AG04449 (cell line): ENCODE measurements at regions of chr7 and their contacts with region 1.

Region 1: DNA sequence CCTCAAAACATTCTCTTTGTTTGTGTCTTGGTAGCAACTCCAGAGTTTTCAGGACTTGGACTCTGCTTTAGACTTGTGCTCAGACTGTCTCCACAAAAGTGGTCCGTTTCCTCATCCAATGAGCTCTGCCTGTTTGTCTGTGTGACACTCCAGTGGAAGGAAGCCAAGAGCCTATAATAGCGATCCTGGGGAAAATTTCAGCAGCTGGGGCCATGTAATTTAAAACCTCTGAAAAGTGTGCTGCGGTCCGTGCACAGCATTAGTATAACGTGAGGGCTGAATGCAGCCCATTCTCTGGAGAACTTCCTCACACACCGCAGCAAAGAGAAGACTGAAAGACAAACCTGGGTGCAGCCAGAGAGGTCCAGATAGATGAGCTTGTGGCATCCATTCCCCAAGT is at the start of gene LRRC17:
- DNase-seq: no peak
- H3K4me3 ChIP-seq: peak within 1 kb of the TSS; percentile 52
- CTCF ChIP-seq: no peak

Region 2: GRCh38 chr7:102891693-102892261 is 21.0 kb before region 1 on chr7:
- CTCF ChIA-PET with region 1: interaction called, 3 read pairs
- POLR2A ChIA-PET with region 1: interaction called, 13 read pairs
- DNase-seq: peak; percentile 66
- H3K4me3 ChIP-seq: no peak overlapping the region
- CTCF ChIP-seq: no peak

Region 3: GRCh38 chr7:102978280-102978679 is 65.5 kb after region 1 on chr7:
- CTCF ChIA-PET with region 1: no interaction called
- POLR2A ChIA-PET with region 1: no interaction called
- DNase-seq: peak; percentile 16
- H3K4me3 ChIP-seq: no peak overlapping the region
- CTCF ChIP-seq: no peak

Region 4: GRCh38 chr7:103068414-103069403 is 156.0 kb after region 1 on chr7:
- CTCF ChIA-PET with region 1: no interaction called
- POLR2A ChIA-PET with region 1: no interaction called
- DNase-seq: no peak
- H3K4me3 ChIP-seq: no peak overlapping the region
- CTCF ChIP-seq: no peak